IMR-90 (cell line): ENCODE measurements at regions of chr1 and their contacts with region 1.

Region 1: DNA sequence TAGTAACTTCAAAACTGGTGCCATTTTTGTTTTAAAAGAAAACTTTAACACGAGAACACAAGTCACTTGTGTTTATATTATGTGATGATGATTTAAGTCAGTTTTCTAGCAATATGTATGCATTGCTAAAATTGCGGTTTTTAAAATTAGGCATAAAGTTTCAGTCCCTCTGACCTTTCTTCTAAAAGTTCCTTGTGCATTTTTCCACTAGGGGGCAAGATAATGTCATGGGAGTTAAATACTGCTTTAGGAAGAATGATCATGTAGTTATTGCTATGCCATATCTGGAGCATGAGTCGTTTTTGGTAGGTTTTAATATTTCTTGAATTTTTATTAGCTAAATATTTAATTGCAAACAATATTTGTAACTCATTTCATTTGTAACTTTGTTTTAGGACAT is 10.7 kb downstream of the CDC7 start:
- DNase-seq: peak; percentile 68
- ATAC-seq: peak; percentile 69
- H3K4me3 ChIP-seq: no peak overlapping the region
- H3K27ac ChIP-seq: no peak overlapping the region
- H3K4me1 ChIP-seq: no peaks in the 10 kb centered on the region
- H3K27me3 ChIP-seq: no peaks in the 10 kb centered on the region
- CTCF ChIP-seq: peak; percentile 68
- POLR2A ChIP-seq: no peak
- RAD21 ChIP-seq: peak; percentile 84

Region 2: GRCh38 chr1:91500756-91501522 is 10.4 kb before region 1 on chr1 and contains the start of gene CDC7:
- CTCF ChIA-PET with region 1: interaction called, 13 read pairs
- POLR2A ChIA-PET with region 1: no interaction called
- dilution Hi-C with region 1: no loop called
- in situ Hi-C with region 1: no loop called
- intact Hi-C with region 1: no loop called
- DNase-seq: peak; percentile 87
- ATAC-seq: peak; percentile 92
- H3K4me3 ChIP-seq: peak within 1 kb of the TSS; percentile 59
- H3K27ac ChIP-seq: peak within 1 kb of the TSS; percentile 66
- H3K4me1 ChIP-seq: no peaks in the 10 kb centered on the region; the same call in 1 of the 2 replicates
- H3K27me3 ChIP-seq: no peaks in the 10 kb centered on the region
- CTCF ChIP-seq: peak; percentile 40
- POLR2A ChIP-seq: 0 out of 2 replicates have a peak, but pooled peaks have one; percentile 42
- RAD21 ChIP-seq: peak; percentile 25
- total RNA-seq, gene CDC7: 4.7 and 6.9 TPM in 2 replicates

Region 3: DNA sequence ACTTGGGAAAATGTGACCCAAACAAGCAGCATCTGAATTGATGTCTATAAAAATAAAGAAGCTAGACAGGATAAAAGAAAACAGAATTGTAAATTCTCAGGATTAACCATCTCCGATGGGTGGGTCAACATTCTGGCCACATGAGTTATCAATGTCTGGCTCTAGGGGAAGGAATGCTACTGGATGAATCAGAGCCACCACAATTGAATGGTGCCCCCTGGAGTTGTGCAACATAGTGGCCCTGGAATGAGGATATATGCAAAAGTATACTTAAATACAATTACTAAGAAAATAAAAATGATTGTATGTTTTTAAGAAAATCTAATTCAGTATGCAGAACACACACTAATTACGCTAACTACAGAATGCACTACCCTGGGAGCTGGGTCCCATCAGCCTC is 188.9 kb after region 1 on chr1:
- CTCF ChIA-PET with region 1: no interaction called
- POLR2A ChIA-PET with region 1: no interaction called
- dilution Hi-C with region 1: no loop called
- in situ Hi-C with region 1: no loop called
- intact Hi-C with region 1: loop called (anchors 5 kb)
- DNase-seq: peak; percentile 59
- ATAC-seq: peak; percentile 22; the same call in 1 of the 2 replicates
- H3K4me3 ChIP-seq: no peak overlapping the region
- H3K27ac ChIP-seq: no peak overlapping the region; the same call in 1 of the 2 replicates
- H3K4me1 ChIP-seq: peaks cover 17% of the 10 kb centered on the region
- H3K27me3 ChIP-seq: no peaks in the 10 kb centered on the region
- CTCF ChIP-seq: peak; percentile 39
- POLR2A ChIP-seq: no peak
- RAD21 ChIP-seq: no peak

Region 4: DNA sequence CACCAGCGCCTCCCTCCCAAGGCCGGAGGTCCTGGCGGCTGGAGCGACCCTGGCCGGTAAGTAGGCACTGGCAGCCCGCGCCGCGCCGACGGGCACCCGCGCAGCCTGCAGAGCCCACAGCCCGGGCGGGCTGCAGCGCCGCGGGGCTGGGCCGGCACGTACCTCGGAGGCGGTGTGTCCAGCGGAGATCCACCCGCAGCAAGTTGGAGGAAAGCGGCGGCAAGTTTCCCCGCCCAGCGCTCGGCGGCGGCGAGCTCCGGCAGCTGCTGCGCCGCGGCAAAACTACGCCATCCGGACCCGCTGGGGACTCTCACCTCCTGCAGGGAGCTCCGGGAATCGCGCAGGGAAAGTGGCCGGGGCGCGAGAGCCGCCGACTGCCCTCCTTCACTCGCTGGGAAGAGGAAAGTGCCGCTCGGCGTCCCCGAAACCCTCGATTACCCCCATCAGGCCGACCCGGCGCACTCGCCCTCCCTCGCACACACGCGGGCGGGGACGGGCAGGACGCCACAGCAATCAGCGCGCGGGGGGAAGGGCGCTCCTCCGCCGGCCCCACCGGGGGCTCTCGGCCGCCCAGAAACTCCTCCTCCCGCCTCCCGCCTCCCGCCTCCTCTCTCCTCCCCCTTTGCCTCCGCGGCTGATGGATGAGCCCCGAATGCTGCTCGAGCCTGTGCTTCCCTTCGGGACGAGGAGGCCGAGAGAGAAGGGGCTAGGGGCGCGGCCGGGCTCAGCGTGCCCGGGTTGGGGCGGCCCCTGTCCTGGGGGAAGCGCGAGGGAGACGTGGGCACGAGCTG is 374.5 kb after region 1 on chr1 and contains the start of gene TGFBR3:
- CTCF ChIA-PET with region 1: interaction called, 5 read pairs
- POLR2A ChIA-PET with region 1: no interaction called
- dilution Hi-C with region 1: no loop called
- in situ Hi-C with region 1: no loop called
- intact Hi-C with region 1: loop called (anchors 1 kb)
- DNase-seq: peak; percentile 90
- ATAC-seq: peak; percentile 93
- H3K4me3 ChIP-seq: peak within 1 kb of the TSS; percentile 90
- H3K27ac ChIP-seq: peak within 1 kb of the TSS; percentile 78
- H3K4me1 ChIP-seq: peaks cover 7% of the 10 kb centered on the region
- H3K27me3 ChIP-seq: no peaks in the 10 kb centered on the region
- CTCF ChIP-seq: peak; percentile 59
- POLR2A ChIP-seq: peak; percentile 73
- RAD21 ChIP-seq: peak; percentile 62
- total RNA-seq, gene TGFBR3: 8.3 and 11.3 TPM in 2 replicates

Region 5: GRCh38 chr1:91929250-91929649 is 417.9 kb after region 1 on chr1:
- CTCF ChIA-PET with region 1: interaction called, 30 read pairs
- POLR2A ChIA-PET with region 1: no interaction called
- dilution Hi-C with region 1: no loop called
- in situ Hi-C with region 1: loop called (anchors 5 kb)
- intact Hi-C with region 1: loop called (anchors 1 kb)
- DNase-seq: no peak
- ATAC-seq: peak; percentile 41; the same call in 1 of the 2 replicates
- H3K4me3 ChIP-seq: no peak overlapping the region
- H3K27ac ChIP-seq: no peak overlapping the region
- H3K4me1 ChIP-seq: peaks cover 2% of the 10 kb centered on the region
- H3K27me3 ChIP-seq: no peaks in the 10 kb centered on the region
- CTCF ChIP-seq: no peak
- POLR2A ChIP-seq: no peak
- RAD21 ChIP-seq: no peak

Region 6: DNA sequence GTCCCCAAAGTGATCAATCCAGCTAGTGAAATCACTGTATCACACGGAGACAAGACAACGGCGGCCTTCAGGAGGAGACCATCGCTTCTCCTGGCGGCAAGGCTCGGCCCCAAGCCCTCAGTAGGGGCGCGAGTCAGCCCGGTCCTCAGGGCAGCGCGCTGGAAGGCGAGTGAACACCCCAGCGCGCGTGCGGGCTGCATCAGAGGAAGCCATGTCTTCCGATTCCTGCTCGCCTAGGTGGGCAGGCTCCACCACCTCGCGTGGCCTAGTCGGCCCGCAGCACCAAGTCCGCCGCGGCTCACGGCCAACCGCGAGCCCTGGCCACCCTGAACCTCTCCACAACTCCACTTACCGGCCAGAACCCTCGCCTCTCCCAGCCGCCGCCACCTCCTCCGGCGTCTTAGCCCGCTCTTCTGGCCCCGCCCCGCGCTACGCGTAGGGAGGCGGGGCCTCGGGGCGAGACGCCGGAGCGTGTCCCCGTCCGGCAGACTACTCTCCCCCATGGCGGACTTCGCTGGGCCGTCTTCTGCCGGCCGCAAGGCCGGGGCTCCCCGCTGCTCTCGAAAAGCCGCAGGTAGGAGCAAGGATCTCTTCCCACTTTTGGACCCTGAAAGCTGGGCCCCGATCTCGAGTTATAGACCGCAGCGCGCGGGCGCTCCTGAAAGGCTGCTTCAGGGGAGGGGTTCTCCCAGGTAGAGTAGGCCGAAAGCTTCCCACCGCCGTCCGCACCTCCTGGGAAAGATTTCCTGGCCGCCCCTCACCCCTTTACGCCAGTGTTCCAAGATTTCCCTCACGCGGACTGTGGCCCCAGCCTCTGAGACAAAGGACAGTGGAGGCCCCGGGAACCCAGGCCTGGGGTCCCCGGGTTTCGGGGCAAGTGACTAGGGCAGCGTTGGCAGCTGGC is 787.4 kb after region 1 on chr1 and contains the starts of genes GLMN and RPAP2:
- CTCF ChIA-PET with region 1: interaction called, 3 read pairs
- POLR2A ChIA-PET with region 1: no interaction called
- dilution Hi-C with region 1: no loop called
- in situ Hi-C with region 1: loop called (anchors 10 kb)
- intact Hi-C with region 1: no loop called
- DNase-seq: peak; percentile 81
- ATAC-seq: peak; percentile 99
- H3K4me3 ChIP-seq: peak within 1 kb of the TSS; percentile 90
- H3K27ac ChIP-seq: peak within 1 kb of the TSS; percentile 96
- H3K4me1 ChIP-seq: no peaks in the 10 kb centered on the region; the same call in 1 of the 2 replicates
- H3K27me3 ChIP-seq: no peaks in the 10 kb centered on the region
- CTCF ChIP-seq: peak; percentile 16; the same call in 1 of the 2 replicates
- POLR2A ChIP-seq: peak; percentile 74; the same call in 1 of the 2 replicates
- RAD21 ChIP-seq: no peak
- total RNA-seq, gene GLMN: 4.1 and 11.9 TPM in 2 replicates
- total RNA-seq, gene RPAP2: 13.6 TPM in 2 replicates